ENCODE measurements at regions of chr10 and their contacts with region 1.

Region 1: GRCh38 chr10:101587725-101588653 is at the starts of genes DPCD and POLL:
- H3K4me3 Mint-ChIP-seq: peak within 1 kb of the TSS; percentile 94
- H3K27ac Mint-ChIP-seq: peak within 1 kb of the TSS; percentile 90
- H3K4me1 Mint-ChIP-seq: peaks cover 38% of the 10 kb centered on the region
- H3K27me3 Mint-ChIP-seq: no peaks in the 10 kb centered on the region

Region 2: DNA sequence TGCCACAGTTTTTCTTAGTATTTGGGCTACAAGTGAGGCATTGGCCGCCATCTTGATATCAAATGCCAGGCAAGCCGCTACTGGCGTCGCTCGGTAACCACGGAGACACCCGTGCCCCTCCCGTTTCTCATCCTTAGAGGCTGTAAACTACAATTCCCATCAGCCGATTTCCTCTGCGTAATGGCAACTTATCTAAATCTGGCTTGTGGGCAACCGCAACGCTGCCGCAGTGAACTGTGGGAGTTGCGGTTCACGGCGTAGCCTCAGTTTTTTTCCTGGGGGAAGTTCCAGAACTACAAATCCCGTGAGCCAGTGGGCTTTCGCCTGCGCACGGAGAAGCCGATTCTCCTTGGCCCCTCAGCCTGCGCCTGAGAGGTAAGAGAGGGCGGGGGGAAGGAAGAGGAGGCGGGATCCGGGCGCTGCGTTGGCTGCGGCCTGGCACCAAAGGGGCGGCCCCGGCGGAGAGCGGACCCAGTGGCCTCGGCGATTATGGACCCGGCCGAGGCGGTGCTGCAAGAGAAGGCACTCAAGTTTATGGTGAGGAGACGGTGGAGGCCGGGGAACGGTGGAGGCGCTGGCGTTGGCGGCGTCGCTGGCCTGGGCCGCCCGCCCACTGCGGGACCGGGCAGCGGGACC is 234.2 kb before region 1 on chr10 and contains the start of gene BTRC:
- intact Hi-C with region 1: loop called (anchors 2 kb)
- H3K4me3 Mint-ChIP-seq: peak within 1 kb of the TSS; percentile 91
- H3K27ac Mint-ChIP-seq: peak within 1 kb of the TSS; percentile 90
- H3K4me1 Mint-ChIP-seq: peaks cover 12% of the 10 kb centered on the region
- H3K27me3 Mint-ChIP-seq: peaks cover 17% of the 10 kb centered on the region

Measured in dendritic cell treated with granulocyte-macrophage colony-stimulating factor and Interleukin-4, amounts not matched to agents 40 ng/mL and 50 ng/mL, for 4 days (primary cell).